ENCODE measurements at regions of chr10 and their contacts with region 1.

Region 1: GRCh38 chr10:69237528-69238159 is 17.5 kb downstream of the HKDC1 start:
- DNase-seq: peak; percentile 83
- H3K4me3 Mint-ChIP-seq: no peak overlapping the region
- H3K27ac Mint-ChIP-seq: no peak overlapping the region
- H3K4me1 Mint-ChIP-seq: peaks cover 23% of the 10 kb centered on the region
- H3K27me3 Mint-ChIP-seq: no peaks in the 10 kb centered on the region
- CTCF ChIP-seq: peak; percentile 89

Region 2: DNA sequence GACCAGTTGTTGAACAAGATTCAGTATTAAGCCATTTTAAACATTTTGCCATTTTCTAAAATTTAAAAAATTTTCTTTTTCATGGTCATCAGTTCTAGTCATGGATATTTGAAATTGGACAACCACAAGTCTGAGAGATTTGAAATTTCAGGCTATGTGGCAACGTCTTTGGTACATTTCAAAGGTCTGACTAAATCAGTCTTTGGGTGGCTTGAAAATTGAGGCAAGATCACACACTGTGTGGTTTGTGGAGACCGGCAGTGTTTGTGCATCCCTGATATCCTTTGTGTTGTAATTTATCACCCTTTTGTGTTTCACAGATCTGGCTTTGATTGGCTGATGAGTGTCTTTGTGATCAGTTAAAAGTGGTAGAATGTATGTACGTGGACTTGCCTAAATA is 480.9 kb before region 1 on chr10:
- CTCF ChIA-PET with region 1: no interaction called
- POLR2A ChIA-PET with region 1: no interaction called
- intact Hi-C with region 1: no loop called
- DNase-seq: no peak
- H3K4me3 Mint-ChIP-seq: no peak overlapping the region
- H3K27ac Mint-ChIP-seq: no peak overlapping the region
- H3K4me1 Mint-ChIP-seq: no peaks in the 10 kb centered on the region
- H3K27me3 Mint-ChIP-seq: no peaks in the 10 kb centered on the region
- CTCF ChIP-seq: no peak

Region 3: GRCh38 chr10:69383558-69383957 is 145.9 kb after region 1 on chr10:
- CTCF ChIA-PET with region 1: interaction called, 10 read pairs
- POLR2A ChIA-PET with region 1: interaction called, 3 read pairs
- intact Hi-C with region 1: no loop called
- DNase-seq: no peak
- H3K4me3 Mint-ChIP-seq: no peak overlapping the region
- H3K27ac Mint-ChIP-seq: no peak overlapping the region
- H3K4me1 Mint-ChIP-seq: peaks cover 8% of the 10 kb centered on the region
- H3K27me3 Mint-ChIP-seq: no peaks in the 10 kb centered on the region
- CTCF ChIP-seq: no peak

Region 4: GRCh38 chr10:69392481-69393000 is 154.9 kb after region 1 on chr10:
- CTCF ChIA-PET with region 1: interaction called, 106 read pairs
- POLR2A ChIA-PET with region 1: interaction called, 36 read pairs
- intact Hi-C with region 1: loop called (anchors 1 kb)
- DNase-seq: peak; percentile 90
- H3K4me3 Mint-ChIP-seq: no peak overlapping the region
- H3K27ac Mint-ChIP-seq: peak overlapping the region; percentile 51
- H3K4me1 Mint-ChIP-seq: peaks cover 19% of the 10 kb centered on the region
- H3K27me3 Mint-ChIP-seq: no peaks in the 10 kb centered on the region
- CTCF ChIP-seq: peak; percentile 96

Region 5: GRCh38 chr10:69408318-69409175 is 170.9 kb after region 1 on chr10:
- CTCF ChIA-PET with region 1: interaction called, 10 read pairs
- POLR2A ChIA-PET with region 1: interaction called, 6 read pairs
- intact Hi-C with region 1: loop called (anchors 1 kb)
- DNase-seq: peak; percentile 93
- H3K4me3 Mint-ChIP-seq: peak overlapping the region; percentile 65
- H3K27ac Mint-ChIP-seq: peak overlapping the region; percentile 40
- H3K4me1 Mint-ChIP-seq: peaks cover 16% of the 10 kb centered on the region
- H3K27me3 Mint-ChIP-seq: no peaks in the 10 kb centered on the region
- CTCF ChIP-seq: peak; percentile 76